BJ (cell line): ENCODE measurements at regions of chr1 and their contacts with region 1.

Region 1: DNA sequence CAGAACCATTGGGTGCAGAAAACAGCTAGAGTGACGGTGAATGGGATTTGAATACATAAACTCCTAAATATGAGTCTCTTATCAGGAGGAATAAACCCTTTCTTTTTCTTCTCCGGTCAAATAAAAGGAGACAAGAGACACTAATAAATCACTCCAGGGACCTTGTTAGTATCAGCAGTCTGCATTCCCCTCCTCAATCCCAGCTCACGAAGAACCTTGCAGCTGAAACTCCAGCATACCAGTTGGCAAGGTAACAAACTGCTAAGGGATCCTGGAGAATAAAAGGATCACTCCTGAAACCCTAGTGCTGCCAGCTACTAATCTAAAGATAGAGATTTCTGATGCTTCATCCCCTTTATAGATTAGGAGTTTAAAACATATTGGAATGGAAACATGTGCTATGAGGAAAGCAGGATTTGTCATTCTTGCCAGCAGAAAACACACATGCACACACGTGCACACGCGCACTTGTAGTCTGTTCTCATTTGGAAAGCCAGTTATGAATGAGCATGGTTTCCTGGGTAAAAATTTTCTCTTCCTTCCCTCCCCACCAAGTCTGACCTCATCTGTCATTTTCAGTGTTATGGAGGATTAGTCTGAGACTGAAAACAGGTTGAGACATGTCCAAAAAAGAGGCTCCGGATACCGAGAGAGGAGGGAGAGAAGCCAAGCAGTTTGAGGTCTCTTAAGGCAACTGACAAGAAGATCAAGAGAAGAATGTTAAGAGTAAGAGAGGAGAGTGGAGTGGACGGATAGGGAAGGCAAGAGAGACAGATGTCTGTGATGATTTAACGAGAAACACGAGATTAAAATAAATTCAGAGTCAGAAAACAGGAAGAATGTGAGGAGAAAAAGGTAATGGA is 10.9 kb downstream of the IER5 start:
- DNase-seq: no peak
- H3K4me3 ChIP-seq: no peak overlapping the region
- H3K27me3 ChIP-seq: no peaks in the 10 kb centered on the region
- CTCF ChIP-seq: no peak

Region 2: GRCh38 chr1:180693565-180694244 is 405.7 kb before region 1 on chr1:
- CTCF ChIA-PET with region 1: no interaction called
- POLR2A ChIA-PET with region 1: no interaction called
- DNase-seq: no peak
- H3K4me3 ChIP-seq: no peak overlapping the region
- H3K27me3 ChIP-seq: no peaks in the 10 kb centered on the region
- CTCF ChIP-seq: no peak

Region 3: DNA sequence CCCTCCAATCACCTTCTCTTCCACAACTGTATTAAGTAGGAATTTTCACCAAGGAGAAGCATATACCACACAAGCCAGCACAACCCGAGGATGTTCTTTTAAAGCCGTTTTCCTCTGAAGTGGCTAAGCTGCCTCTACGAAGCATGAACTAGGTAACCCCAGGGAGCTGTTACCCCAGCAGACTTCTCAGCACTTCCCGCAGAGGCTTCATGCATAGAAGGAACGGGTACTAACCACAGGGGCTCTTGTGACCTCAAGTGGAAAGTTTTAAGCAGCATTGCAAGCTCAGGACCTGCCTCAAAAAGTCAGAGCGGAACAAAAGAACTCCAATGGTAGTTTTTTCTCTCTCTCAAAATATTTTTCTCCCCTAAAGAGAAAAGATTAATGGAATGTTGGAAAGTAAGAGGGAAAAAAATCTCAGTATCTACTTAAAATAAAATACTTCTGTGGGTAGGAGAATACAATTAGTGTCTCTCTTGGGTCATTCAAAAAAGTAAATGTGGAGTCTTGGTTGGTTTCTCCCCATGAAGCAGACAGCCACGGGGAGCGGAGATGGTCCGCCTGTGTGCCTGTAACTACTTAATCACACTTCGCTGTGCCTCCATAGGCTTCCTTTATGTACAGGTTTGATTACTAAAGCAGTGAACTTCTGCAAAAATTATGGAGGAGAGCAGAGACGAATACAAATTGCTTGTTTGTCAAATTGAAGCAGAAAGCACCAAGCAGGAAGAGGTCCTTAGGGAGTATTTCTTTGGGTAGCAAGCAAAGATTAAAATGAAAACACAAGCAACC is 117.6 kb before region 1 on chr1:
- CTCF ChIA-PET with region 1: no interaction called
- POLR2A ChIA-PET with region 1: no interaction called
- DNase-seq: no peak
- H3K4me3 ChIP-seq: no peak overlapping the region
- H3K27me3 ChIP-seq: no peaks in the 10 kb centered on the region
- CTCF ChIP-seq: no peak

Region 4: GRCh38 chr1:181134543-181135362 is 35.4 kb after region 1 on chr1:
- CTCF ChIA-PET with region 1: interaction called, 12 read pairs
- POLR2A ChIA-PET with region 1: interaction called, 9 read pairs
- DNase-seq: no peak
- H3K4me3 ChIP-seq: no peak overlapping the region
- H3K27me3 ChIP-seq: no peaks in the 10 kb centered on the region
- CTCF ChIP-seq: no peak

Region 5: DNA sequence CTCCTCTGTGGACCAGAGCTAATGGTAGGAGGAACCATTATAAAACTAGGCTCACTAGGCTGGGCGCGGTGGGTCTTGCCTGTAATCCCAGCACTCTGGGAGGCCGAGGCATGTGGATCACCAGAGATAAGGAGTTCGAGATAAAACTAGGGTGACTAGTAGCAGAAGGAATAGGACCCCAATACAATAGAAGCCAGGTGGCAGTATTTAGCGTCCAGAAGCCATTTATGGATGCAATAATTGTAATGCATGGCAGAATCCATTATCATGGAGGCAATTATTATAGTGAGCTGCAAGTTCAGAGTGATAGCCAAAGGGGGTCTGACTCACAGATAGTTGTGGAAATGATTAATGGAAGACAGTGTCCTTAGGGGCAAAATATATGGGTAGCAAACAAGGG is 133.1 kb after region 1 on chr1:
- CTCF ChIA-PET with region 1: no interaction called
- POLR2A ChIA-PET with region 1: no interaction called
- DNase-seq: no peak
- H3K4me3 ChIP-seq: no peak overlapping the region
- H3K27me3 ChIP-seq: no peaks in the 10 kb centered on the region; the same call in 1 of the 2 replicates
- CTCF ChIP-seq: 0 out of 2 replicates have a peak, but pooled peaks have one; percentile 2